ENCODE measurements at regions of chr7 and their contacts with region 1.

Region 1: GRCh38 chr7:22672846-22673652 is 54.0 kb upstream of the IL6 start:
- DNase-seq: no peak
- H3K4me3 Mint-ChIP-seq: no peak overlapping the region
- H3K27ac Mint-ChIP-seq: peak overlapping the region; percentile 42
- H3K4me1 Mint-ChIP-seq: peaks cover 71% of the 10 kb centered on the region
- H3K27me3 Mint-ChIP-seq: peaks cover 3% of the 10 kb centered on the region

Region 2: DNA sequence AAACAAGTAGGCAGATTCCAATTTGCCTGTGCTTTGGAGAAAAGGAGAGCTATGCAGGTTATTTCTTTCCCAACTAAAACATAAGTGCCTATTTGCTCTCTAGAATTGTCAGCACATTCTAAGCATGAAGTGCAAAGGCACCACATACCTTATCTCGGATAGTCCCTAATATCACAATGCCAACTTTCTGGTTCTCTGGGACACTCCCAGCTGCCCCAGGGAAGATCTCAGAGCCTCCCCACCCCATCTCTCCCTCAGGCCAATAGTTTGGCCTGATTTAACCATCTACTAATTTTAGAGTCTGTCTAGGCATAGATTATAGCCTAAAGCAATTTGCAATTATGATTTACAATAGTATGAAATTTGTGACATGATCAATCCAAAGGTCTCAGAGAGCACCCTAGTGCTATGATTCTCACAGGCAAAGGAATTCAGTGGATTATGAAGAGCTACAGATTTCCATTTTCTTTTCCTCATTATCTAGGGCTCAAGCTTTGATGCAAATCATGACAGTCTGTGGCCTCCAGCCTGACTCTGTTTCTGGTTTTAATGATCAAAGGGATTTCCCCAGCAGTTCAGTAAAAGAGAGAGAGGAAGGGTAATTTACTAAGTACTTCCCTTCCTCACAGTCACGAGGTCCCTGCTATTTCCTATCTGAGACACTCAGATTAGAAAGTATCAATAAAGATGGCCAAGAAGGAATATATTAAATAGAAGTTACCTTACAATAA is 25.0 kb after region 1 on chr7:
- CTCF ChIA-PET with region 1: interaction called, 8 read pairs
- POLR2A ChIA-PET with region 1: interaction called, 47 read pairs
- DNase-seq: peak; percentile 26
- H3K4me3 Mint-ChIP-seq: peak overlapping the region; percentile 1
- H3K27ac Mint-ChIP-seq: peak overlapping the region; percentile 67
- H3K4me1 Mint-ChIP-seq: peaks cover 63% of the 10 kb centered on the region
- H3K27me3 Mint-ChIP-seq: peaks cover 2% of the 10 kb centered on the region